HepG2 (cell line): ENCODE measurements at regions of chrX and their contacts with region 1.

Region 1: DNA sequence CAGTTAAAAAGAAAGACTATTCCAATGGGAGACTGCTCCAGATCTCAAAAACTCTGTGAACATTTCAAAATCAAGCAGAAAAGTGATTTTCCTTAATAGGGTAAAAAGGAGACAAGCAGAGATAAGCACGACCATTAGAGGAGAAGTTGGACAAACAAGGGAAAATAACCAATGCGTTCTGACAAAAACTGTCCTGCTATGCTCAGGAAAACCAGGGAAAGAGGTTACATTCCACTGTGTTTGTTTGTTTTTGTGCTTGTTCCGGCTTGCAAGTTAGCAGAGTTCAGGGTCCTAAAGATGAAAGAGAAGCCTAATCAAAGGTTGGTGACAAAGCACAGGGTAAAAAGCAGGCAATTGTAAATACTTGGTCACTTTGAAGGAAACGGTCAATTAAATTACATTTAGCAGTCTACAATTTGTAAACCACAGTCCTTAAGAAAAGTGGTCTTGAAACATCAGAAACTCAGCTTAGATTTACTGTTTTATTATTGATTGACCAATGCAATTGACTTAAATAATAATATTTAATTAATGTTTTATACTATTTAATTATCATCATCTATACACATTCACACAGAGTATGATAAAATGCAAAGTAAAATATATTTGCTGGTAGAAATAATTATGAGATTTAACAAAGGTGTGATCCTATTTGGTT is 186.2 kb upstream of the CPXCR1 start:
- DNase-seq: peak; percentile 97
- ATAC-seq: peak; percentile 99
- H3K4me3 ChIP-seq: no peak overlapping the region
- H3K27ac ChIP-seq: peak overlapping the region; percentile 97
- H3K4me1 ChIP-seq: peaks cover 56% of the 10 kb centered on the region
- H3K27me3 ChIP-seq: no peaks in the 10 kb centered on the region
- CTCF ChIP-seq: no peak
- EP300 ChIP-seq: peak; percentile 91 to 100; a peak in 3 of 4 replicates
- POLR2A ChIP-seq: no peak
- RAD21 ChIP-seq: no peak

Region 2: GRCh38 chrX:88425739-88426138 is 135.1 kb before region 1 on chrX:
- CTCF ChIA-PET with region 1: no interaction called
- POLR2A ChIA-PET with region 1: no interaction called
- in situ Hi-C with region 1: no loop called
- intact Hi-C with region 1: loop called (anchors 1 kb)
- DNase-seq: peak; percentile 18
- ATAC-seq: no peak
- H3K4me3 ChIP-seq: no peak overlapping the region
- H3K27ac ChIP-seq: no peak overlapping the region
- H3K4me1 ChIP-seq: peaks cover 8% of the 10 kb centered on the region; the same call in 1 of the 2 replicates
- H3K27me3 ChIP-seq: no peaks in the 10 kb centered on the region
- CTCF ChIP-seq: peak; percentile 52
- EP300 ChIP-seq: no peak
- POLR2A ChIP-seq: no peak
- RAD21 ChIP-seq: no peak

Region 3: DNA sequence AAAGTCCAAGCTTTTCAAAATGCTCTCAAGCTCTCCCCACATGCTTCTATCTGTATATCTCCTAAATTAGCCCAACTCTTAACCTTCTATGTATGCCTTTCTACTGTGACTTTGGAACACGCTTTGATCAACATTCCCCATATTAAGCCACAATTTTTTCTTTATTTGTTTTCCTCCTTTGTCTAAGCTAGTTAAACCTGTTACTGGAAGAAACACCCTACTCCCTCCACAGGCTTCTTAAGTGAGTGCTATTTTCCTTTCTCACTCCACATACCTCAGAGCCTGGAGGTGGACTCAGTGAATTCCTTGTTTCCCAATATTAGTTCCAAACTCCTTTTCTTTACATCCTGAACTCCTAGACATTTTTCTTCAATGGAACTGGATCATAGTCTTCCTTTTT is 117.5 kb before region 1 on chrX:
- CTCF ChIA-PET with region 1: no interaction called
- POLR2A ChIA-PET with region 1: no interaction called
- in situ Hi-C with region 1: no loop called
- intact Hi-C with region 1: loop called (anchors 5 kb)
- DNase-seq: no peak
- ATAC-seq: no peak
- H3K4me3 ChIP-seq: no peak overlapping the region
- H3K27ac ChIP-seq: no peak overlapping the region
- H3K4me1 ChIP-seq: peaks cover 29% of the 10 kb centered on the region
- H3K27me3 ChIP-seq: no peaks in the 10 kb centered on the region
- CTCF ChIP-seq: no peak
- EP300 ChIP-seq: no peak
- POLR2A ChIP-seq: no peak
- RAD21 ChIP-seq: no peak

Region 4: GRCh38 chrX:88604433-88605221 is 43.8 kb after region 1 on chrX:
- CTCF ChIA-PET with region 1: no interaction called
- POLR2A ChIA-PET with region 1: interaction called, 31 read pairs
- in situ Hi-C with region 1: no loop called
- intact Hi-C with region 1: loop called (anchors 1 kb)
- DNase-seq: peak; percentile 96
- ATAC-seq: peak; percentile 99
- H3K4me3 ChIP-seq: peak overlapping the region in 1 of 3 experiments; percentile 25; a peak in 1 of 6 replicates
- H3K27ac ChIP-seq: peak overlapping the region; percentile 98
- H3K4me1 ChIP-seq: peaks cover 57% of the 10 kb centered on the region
- H3K27me3 ChIP-seq: no peaks in the 10 kb centered on the region
- CTCF ChIP-seq: no peak
- EP300 ChIP-seq: peak in 1 of 2 experiments; percentile 93; a peak in 2 of 4 replicates
- POLR2A ChIP-seq: peak; percentile 64 to 73; a peak in 3 of 4 replicates
- RAD21 ChIP-seq: no peak

Region 5: DNA sequence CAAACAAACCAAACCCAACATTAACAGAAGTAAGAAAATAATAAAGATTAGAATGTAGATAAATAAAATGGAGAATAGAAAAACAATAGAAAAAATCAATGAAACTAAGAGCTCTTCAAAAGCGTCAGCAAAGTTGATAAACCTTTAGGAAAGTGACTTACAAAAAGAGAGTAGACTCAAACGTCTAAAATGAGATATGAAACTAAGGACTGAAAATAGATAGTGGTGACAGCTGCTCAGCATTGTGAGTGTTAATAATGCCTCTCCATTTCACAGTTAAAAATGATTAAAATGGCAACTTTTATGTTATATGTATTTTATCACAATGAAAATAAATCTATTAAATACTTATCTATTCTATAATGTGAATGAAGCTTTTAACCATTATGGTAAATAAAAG is 60.5 kb after region 1 on chrX:
- CTCF ChIA-PET with region 1: no interaction called
- POLR2A ChIA-PET with region 1: no interaction called
- in situ Hi-C with region 1: no loop called
- intact Hi-C with region 1: no loop called
- DNase-seq: no peak
- ATAC-seq: no peak
- H3K4me3 ChIP-seq: no peak overlapping the region
- H3K27ac ChIP-seq: no peak overlapping the region
- H3K4me1 ChIP-seq: no peaks in the 10 kb centered on the region
- H3K27me3 ChIP-seq: no peaks in the 10 kb centered on the region
- CTCF ChIP-seq: no peak
- EP300 ChIP-seq: no peak
- POLR2A ChIP-seq: no peak
- RAD21 ChIP-seq: no peak

Region 6: DNA sequence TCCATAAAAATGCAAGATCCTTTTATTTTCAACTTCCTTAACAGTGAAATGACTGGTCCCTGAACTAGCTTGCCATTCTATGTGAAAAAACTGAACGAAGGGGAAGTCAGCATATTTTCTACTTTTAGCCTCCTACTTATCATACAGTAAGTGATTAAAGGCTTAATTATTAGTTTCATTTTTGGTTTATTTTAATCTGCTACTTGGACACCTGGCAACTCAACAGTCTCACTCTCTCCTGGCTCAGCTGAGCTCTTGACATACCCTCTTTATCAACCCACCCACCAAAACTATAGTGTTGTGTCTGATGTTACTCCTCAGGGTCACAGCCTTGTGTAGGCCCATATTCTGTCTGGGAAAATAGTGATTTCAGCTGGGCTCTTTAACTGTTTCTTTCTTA is 100.0 kb after region 1 on chrX:
- CTCF ChIA-PET with region 1: no interaction called
- POLR2A ChIA-PET with region 1: no interaction called
- in situ Hi-C with region 1: no loop called
- intact Hi-C with region 1: no loop called
- DNase-seq: no peak
- ATAC-seq: no peak
- H3K4me3 ChIP-seq: no peak overlapping the region
- H3K27ac ChIP-seq: no peak overlapping the region
- H3K4me1 ChIP-seq: no peaks in the 10 kb centered on the region
- H3K27me3 ChIP-seq: no peaks in the 10 kb centered on the region
- CTCF ChIP-seq: no peak
- EP300 ChIP-seq: no peak
- POLR2A ChIP-seq: no peak
- RAD21 ChIP-seq: no peak

Region 7: DNA sequence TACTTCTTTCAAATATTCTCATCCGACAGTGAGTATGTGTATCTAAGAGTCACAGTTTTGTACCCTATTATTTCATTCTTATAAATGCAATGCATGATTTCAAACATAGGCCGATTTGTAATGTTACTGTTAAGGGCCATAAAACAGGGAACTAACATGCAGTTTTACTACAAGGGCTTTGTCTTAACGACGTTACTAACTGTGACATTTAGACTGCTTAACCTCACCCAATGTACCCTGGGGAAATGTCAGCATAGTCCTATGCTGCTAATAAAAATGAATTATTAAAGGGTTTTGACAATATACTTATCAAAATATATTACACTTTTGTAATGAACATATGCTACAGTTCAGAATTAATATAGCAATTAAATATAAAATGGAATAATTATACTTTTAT is 111.5 kb after region 1 on chrX:
- CTCF ChIA-PET with region 1: no interaction called
- POLR2A ChIA-PET with region 1: no interaction called
- in situ Hi-C with region 1: no loop called
- intact Hi-C with region 1: no loop called
- DNase-seq: no peak
- ATAC-seq: no peak
- H3K4me3 ChIP-seq: no peak overlapping the region
- H3K27ac ChIP-seq: no peak overlapping the region
- H3K4me1 ChIP-seq: no peaks in the 10 kb centered on the region
- H3K27me3 ChIP-seq: no peaks in the 10 kb centered on the region
- CTCF ChIP-seq: no peak
- EP300 ChIP-seq: no peak
- POLR2A ChIP-seq: no peak
- RAD21 ChIP-seq: no peak